B cell (primary cell): ENCODE measurements at regions of chr4 and their contacts with region 1.

Region 1: GRCh38 chr4:48085821-48086607 is 48.0 kb downstream of the TXK start:
- DNase-seq: no peak
- ATAC-seq: no peak
- H3K4me3 ChIP-seq: no peak overlapping the region
- H3K4me3 Mint-ChIP-seq: no peak overlapping the region
- H3K27ac ChIP-seq: no peak overlapping the region
- H3K27ac Mint-ChIP-seq: no peak overlapping the region
- H3K4me1 ChIP-seq: no peaks in the 10 kb centered on the region
- H3K4me1 Mint-ChIP-seq: no peaks in the 10 kb centered on the region
- H3K27me3 ChIP-seq: no peaks in the 10 kb centered on the region
- H3K27me3 Mint-ChIP-seq: peaks cover 15% of the 10 kb centered on the region
- CTCF ChIP-seq: no peak

Region 2: DNA sequence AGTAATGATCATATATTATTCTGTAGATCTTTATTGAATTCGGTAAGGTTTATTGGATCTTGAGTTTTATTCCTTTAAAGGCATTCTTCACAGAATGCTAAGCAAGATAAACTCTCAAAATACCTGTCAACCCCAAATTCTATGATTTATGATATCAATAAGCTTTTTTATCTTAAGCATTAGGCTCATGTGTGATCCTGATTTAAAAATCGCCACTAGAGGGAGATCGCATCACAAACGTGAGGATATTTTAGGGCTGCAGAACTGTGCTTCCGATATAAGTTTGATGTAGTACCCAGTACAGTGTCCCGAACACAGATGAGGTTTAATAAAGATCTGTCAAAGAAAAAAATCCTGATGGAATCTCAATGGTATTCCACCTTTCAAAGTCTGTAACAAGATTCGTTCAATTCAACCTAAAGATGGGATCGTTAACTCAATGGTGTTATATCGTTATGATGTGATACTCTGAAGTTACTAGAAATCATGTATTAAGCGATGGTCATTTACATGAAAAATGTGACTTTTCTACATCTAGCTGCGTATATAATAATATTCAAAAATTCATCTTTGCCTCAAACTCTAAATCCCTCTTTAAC is 417.1 kb before region 1 on chr4:
- CTCF ChIA-PET with region 1: interaction called, 5 read pairs
- POLR2A ChIA-PET with region 1: no interaction called
- intact Hi-C with region 1: loop called (anchors 1 kb)
- DNase-seq: peak; percentile 54
- ATAC-seq: no peak
- H3K4me3 ChIP-seq: no peak overlapping the region
- H3K4me3 Mint-ChIP-seq: no peak overlapping the region
- H3K27ac ChIP-seq: no peak overlapping the region
- H3K27ac Mint-ChIP-seq: no peak overlapping the region
- H3K4me1 ChIP-seq: no peaks in the 10 kb centered on the region
- H3K4me1 Mint-ChIP-seq: peaks cover 2% of the 10 kb centered on the region
- H3K27me3 ChIP-seq: peaks cover 0 to 3% (median 0%) of the 10 kb centered on the region in 4 experiments
- H3K27me3 Mint-ChIP-seq: peaks cover 32% of the 10 kb centered on the region
- CTCF ChIP-seq: peak; percentile 81

Region 3: DNA sequence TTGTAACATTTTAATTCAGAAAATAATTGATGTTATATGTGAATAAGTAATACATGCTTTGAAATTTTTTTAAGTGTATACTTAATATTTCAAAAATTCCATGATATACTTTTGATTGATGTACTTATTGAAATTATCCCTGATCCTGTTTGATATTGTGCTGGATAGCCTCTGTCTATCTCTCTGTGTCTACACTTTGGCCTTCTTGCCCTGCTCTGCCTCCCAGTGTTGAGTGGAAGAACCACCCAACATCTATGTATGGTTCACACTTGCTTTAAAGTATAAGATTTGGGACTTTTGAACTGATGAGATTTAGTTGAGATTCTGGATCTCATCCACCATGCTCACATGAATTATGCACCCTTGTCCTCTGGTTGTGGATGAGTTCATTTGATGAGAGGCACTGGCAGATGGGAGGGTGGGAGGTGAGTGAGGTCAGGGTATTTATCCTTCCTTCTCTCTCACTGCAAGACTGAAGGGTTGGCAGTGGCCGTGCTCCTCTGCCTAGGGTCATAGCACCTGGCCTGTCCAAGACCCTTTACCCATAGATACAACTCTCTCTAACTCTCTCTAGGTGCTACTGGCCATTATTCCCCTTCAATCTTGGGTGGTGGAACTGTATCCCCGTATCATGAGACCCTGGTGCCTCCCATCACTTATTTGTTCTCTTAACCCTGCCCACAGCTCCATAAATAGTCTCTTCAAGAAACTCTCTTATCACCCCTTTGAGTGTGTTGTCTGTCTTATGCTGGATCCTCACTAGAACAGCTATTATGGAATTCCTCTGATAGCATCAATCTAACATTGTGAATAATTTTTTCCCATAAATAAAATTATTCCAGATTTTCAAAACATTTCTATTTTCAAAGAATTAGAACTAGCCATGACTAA is 323.4 kb before region 1 on chr4:
- CTCF ChIA-PET with region 1: no interaction called
- POLR2A ChIA-PET with region 1: no interaction called
- intact Hi-C with region 1: no loop called
- DNase-seq: no peak
- ATAC-seq: no peak
- H3K4me3 ChIP-seq: no peak overlapping the region
- H3K4me3 Mint-ChIP-seq: no peak overlapping the region
- H3K27ac ChIP-seq: no peak overlapping the region
- H3K27ac Mint-ChIP-seq: no peak overlapping the region
- H3K4me1 ChIP-seq: no peaks in the 10 kb centered on the region
- H3K4me1 Mint-ChIP-seq: no peaks in the 10 kb centered on the region
- H3K27me3 ChIP-seq: no peaks in the 10 kb centered on the region
- H3K27me3 Mint-ChIP-seq: peaks cover 6% of the 10 kb centered on the region
- CTCF ChIP-seq: no peak

Region 4: DNA sequence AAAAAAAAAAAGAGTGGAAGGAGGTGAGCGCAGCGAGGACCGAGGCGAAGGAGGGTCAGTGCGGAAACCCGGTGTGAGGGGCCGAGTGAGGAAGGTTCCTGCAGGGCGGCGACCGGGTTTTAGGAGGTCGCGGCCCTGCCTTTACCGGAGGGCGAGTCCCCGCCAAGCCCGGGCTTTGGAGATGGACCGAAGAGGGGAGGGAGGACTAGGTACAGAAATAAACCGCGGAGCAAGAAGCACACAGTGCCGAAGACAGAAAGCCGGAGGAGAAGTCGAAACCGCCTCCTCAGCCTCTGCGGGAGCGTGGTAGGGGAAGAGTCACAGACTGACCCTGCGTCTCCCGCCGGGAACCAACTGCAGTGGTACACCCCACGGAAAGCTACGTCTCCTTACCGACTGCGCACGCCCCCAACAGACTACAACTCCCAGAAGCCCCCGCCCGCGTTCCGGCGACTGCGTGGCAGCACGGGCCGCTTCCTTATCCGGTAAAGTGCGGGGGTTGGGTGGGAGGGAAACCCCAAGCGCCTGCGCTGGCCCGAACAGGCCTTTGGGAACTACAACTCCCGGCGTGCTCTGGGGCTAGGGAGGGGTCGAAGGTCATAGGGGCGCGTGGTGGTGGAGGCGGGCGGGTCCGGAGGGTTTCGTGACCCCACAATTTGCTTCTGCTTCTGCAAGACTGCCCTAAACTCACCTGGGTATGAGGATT is 171.6 kb before region 1 on chr4 and contains the start of gene NFXL1:
- CTCF ChIA-PET with region 1: no interaction called
- POLR2A ChIA-PET with region 1: no interaction called
- intact Hi-C with region 1: loop called (anchors 5 kb)
- DNase-seq: peak; percentile 95
- ATAC-seq: peak; percentile 94
- H3K4me3 ChIP-seq: peak within 1 kb of the TSS; percentile 85 to 100 (median 99)
- H3K4me3 Mint-ChIP-seq: peak within 1 kb of the TSS; percentile 99
- H3K27ac ChIP-seq: peak within 1 kb of the TSS; percentile 48 to 75
- H3K27ac Mint-ChIP-seq: peak within 1 kb of the TSS; percentile 97
- H3K4me1 ChIP-seq: peaks cover 14 to 17% of the 10 kb centered on the region in 2 donors
- H3K4me1 Mint-ChIP-seq: peaks cover 27% of the 10 kb centered on the region
- H3K27me3 ChIP-seq: no peaks in the 10 kb centered on the region
- H3K27me3 Mint-ChIP-seq: no peaks in the 10 kb centered on the region
- CTCF ChIP-seq: no peak
- total RNA-seq, gene NFXL1: 16.5 and 16.6 TPM in 2 replicates

Region 5: DNA sequence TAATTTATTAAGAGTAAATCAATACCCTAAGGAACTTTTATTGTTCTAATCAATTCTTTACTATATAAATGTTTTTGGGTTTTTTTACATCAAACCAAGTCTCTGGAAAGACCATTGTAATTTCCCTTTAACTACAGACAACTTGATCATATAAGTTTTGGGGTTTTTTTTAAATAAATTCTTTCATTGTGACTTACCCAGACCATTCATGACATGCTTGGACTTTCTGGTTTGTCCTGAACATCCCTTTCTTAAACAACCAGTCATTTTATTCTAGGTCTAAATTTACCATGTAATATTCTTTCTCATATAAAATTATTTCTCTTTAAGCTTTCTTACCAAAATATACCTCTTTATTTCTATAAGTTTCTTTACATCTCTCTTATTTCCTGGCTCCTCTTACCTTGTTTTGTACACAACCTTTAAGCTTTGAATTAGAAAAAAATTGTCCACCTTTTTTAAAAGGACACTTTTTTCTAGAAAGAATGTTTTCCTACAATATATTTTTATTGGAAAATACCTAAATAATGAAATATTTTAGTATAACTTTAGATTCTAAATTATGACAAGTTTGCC is 77.9 kb before region 1 on chr4:
- CTCF ChIA-PET with region 1: interaction called, 218 read pairs
- POLR2A ChIA-PET with region 1: no interaction called
- intact Hi-C with region 1: loop called (anchors 1 kb)
- DNase-seq: no peak
- ATAC-seq: no peak
- H3K4me3 ChIP-seq: no peak overlapping the region
- H3K4me3 Mint-ChIP-seq: no peak overlapping the region
- H3K27ac ChIP-seq: no peak overlapping the region
- H3K27ac Mint-ChIP-seq: no peak overlapping the region
- H3K4me1 ChIP-seq: no peaks in the 10 kb centered on the region
- H3K4me1 Mint-ChIP-seq: no peaks in the 10 kb centered on the region
- H3K27me3 ChIP-seq: peaks cover 0 to 8% (median 4%) of the 10 kb centered on the region in 4 experiments
- H3K27me3 Mint-ChIP-seq: peaks cover 17% of the 10 kb centered on the region
- CTCF ChIP-seq: no peak

Region 6: DNA sequence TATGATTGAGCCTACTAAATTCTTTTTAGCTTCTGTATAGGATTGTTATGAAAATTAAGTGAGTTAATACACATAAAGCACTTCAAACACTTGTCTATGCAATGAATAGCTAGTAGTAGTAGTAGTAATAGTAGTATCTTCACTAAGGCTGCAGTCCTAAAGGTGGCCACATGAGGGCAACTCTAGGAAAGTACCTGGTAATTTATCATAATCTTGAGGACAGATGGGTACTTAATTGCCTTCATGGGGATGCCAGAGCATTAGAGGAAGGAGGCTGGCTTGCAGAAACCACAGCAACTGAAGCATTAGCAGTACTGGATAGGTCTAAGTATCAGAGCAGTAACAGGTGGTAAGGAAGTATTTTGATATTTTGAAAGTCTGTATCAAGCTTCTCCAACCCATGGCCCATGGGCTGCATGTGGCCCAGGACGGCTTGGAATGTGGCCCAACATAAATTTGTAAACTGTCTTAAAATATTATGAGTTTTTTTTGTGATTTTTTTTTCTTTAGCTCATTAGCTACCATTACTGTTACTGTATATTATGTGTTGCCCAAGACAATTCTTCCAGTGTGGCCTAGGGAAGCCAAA is 52.1 kb before region 1 on chr4:
- CTCF ChIA-PET with region 1: interaction called, 74 read pairs
- POLR2A ChIA-PET with region 1: interaction called, 3 read pairs
- intact Hi-C with region 1: loop called (anchors 1 kb)
- DNase-seq: peak; percentile 83
- ATAC-seq: peak; percentile 69
- H3K4me3 ChIP-seq: no peak overlapping the region
- H3K4me3 Mint-ChIP-seq: no peak overlapping the region
- H3K27ac ChIP-seq: no peak overlapping the region
- H3K27ac Mint-ChIP-seq: no peak overlapping the region
- H3K4me1 ChIP-seq: peaks cover 35 to 37% of the 10 kb centered on the region in 2 donors
- H3K4me1 Mint-ChIP-seq: peaks cover 40% of the 10 kb centered on the region
- H3K27me3 ChIP-seq: no peaks in the 10 kb centered on the region
- H3K27me3 Mint-ChIP-seq: peaks cover 4% of the 10 kb centered on the region
- CTCF ChIP-seq: peak; percentile 77

Region 7: GRCh38 chr4:48074657-48075056 is 11.4 kb before region 1 on chr4:
- CTCF ChIA-PET with region 1: interaction called, 11 read pairs
- POLR2A ChIA-PET with region 1: interaction called, 3 read pairs
- intact Hi-C with region 1: no loop called
- DNase-seq: no peak
- ATAC-seq: no peak
- H3K4me3 ChIP-seq: no peak overlapping the region
- H3K4me3 Mint-ChIP-seq: no peak overlapping the region
- H3K27ac ChIP-seq: no peak overlapping the region
- H3K27ac Mint-ChIP-seq: no peak overlapping the region
- H3K4me1 ChIP-seq: no peaks in the 10 kb centered on the region
- H3K4me1 Mint-ChIP-seq: no peaks in the 10 kb centered on the region
- H3K27me3 ChIP-seq: no peaks in the 10 kb centered on the region
- H3K27me3 Mint-ChIP-seq: peaks cover 3% of the 10 kb centered on the region
- CTCF ChIP-seq: no peak